PC-9 (cell line): ENCODE measurements at regions of chr3 and their contacts with region 1.

Region 1: DNA sequence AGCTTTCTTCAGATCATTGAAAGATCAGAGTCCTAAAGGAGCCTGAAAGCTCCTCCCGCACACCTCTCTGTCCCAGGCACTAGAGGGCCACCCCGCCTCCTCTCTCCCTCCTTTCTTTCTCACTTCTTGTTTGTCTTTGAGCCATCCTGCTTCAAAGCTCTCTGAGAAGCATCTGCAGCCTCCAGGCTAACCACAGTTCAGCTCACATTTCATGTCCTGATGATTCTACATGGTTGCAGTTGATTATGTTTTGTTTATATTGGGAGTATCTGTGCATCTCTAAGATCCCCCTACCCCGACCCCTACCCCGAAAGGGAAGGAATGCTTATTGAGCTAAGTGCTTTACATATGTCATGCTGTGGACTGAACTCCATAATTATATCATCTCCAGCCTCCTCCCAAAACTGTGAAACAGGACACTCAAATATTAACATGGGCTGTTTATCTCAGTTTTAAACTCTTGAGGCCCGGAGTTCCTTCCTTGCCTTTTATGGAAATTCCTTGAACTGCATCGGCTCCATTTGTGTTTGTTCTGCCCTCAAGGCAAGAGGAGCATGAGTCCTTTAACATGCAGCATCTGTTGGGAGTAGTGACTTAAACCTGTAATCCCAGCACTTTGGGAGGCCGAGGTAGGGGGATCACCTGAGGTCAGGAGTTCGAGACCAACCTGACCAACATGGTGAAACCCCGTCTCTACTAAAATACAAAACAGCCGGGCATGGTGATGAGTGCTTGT is 30.9 kb downstream of the MGLL start:
- DNase-seq: peak; percentile 65 to 84
- H3K4me3 ChIP-seq: no peak overlapping the region
- H3K27ac ChIP-seq: peak overlapping the region; percentile 54
- H3K4me1 ChIP-seq: peaks cover 30% of the 10 kb centered on the region
- H3K27me3 ChIP-seq: no peaks in the 10 kb centered on the region
- CTCF ChIP-seq: peak; percentile 46; the same call in 1 of the 2 replicates

Region 2: DNA sequence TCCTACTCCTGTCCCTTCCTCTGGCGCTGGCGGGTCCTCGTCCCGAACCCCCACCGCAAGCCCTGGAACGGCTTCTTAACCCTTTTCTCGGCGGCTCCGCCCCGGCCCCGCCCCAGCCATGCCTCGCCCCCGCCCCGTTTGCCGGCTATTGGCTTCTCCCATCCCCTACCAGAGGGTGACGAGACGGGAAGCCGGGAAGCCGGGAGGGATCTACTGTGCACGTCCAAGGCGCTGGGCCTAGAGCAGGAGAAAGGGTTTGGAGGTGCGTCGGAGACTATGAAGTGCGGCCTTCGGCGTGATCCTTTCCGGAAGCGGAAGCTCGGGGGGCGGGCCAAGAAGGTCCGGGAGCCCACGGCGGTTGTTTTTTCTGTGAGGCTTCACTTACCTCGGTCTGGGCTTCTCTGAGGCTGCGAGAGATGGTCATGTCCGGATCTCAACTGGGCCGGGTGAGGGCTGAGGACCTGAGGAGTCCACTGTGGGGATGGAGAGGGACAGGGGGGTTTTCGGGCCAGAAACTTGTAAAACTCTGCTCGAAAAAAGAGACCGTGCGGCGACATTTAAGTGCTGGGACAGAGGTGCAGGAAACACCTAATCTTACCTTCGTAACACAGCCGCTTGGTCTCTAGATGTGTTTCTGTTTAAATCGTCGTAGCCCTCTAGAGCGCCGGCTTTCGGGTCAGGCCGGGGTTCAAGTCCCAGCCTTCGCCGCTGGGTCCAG is 1801.0 kb before region 1 on chr3:
- CTCF ChIA-PET with region 1: no interaction called
- POLR2A ChIA-PET with region 1: interaction called, 10 read pairs
- intact Hi-C with region 1: no loop called
- DNase-seq: peak; percentile 70 to 85
- H3K4me3 ChIP-seq: peak overlapping the region; percentile 63
- H3K27ac ChIP-seq: no peak overlapping the region
- H3K4me1 ChIP-seq: no peaks in the 10 kb centered on the region; the same call in 1 of the 2 replicates
- H3K27me3 ChIP-seq: peaks cover 4% of the 10 kb centered on the region; the same call in 1 of the 2 replicates
- CTCF ChIP-seq: no peak

Region 3: DNA sequence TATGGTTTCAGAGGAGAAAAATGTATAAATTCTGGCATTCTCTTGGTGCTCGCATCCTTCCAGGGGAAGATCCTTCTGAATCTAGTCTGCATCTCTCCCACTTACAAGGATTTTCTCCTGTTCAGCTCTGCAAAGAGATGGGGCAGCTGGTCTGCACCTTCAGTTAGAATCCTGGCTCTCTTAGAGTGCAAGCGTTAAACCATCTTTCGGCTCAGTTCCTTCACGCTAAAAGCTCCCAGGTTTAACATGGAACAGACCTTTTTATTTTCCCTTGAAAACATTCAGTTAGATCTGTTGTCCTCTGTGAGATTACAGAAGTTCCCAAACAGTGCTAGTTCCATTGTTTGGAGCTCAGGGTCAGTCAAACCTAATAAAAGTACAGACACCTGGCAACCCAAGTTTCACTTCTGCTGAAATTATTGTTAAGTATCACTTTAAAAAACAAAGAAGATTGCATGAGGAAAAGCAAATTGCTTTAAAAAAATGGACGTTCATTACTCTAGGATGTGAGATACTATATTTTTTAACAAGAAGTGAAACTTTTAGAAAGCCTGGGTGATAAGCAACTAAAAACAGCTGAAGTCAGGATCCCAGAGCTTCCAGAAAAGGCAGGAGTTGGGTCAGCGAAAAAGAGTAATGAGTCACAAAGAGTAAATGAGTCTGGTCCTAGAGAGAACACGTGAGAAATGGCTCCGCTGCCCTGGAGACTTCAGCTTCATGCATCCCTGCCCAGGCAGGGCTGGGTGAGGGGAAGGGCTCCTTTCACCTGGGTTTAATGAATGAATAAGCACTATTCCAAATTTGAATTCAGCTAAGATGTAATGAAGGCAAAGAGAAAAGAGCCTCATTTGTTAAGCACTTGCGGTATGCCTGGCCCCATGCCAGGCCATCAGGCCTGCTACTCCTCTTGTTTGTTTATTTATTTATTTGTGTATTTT is 55.3 kb before region 1 on chr3:
- CTCF ChIA-PET with region 1: no interaction called
- POLR2A ChIA-PET with region 1: no interaction called
- intact Hi-C with region 1: no loop called
- DNase-seq: peak in 1 of 2 experiments; percentile 36
- H3K4me3 ChIP-seq: no peak overlapping the region
- H3K27ac ChIP-seq: no peak overlapping the region
- H3K4me1 ChIP-seq: peaks cover 10% of the 10 kb centered on the region
- H3K27me3 ChIP-seq: no peaks in the 10 kb centered on the region
- CTCF ChIP-seq: no peak

Region 4: GRCh38 chr3:127762077-127762786 is 29.1 kb before region 1 on chr3:
- CTCF ChIA-PET with region 1: no interaction called
- POLR2A ChIA-PET with region 1: no interaction called
- intact Hi-C with region 1: no loop called
- DNase-seq: no peak
- H3K4me3 ChIP-seq: no peak overlapping the region
- H3K27ac ChIP-seq: no peak overlapping the region
- H3K4me1 ChIP-seq: no peaks in the 10 kb centered on the region
- H3K27me3 ChIP-seq: no peaks in the 10 kb centered on the region
- CTCF ChIP-seq: no peak

Region 5: GRCh38 chr3:127817396-127817841 is 26.0 kb after region 1 on chr3:
- CTCF ChIA-PET with region 1: interaction called, 19 read pairs
- POLR2A ChIA-PET with region 1: interaction called, 3 read pairs
- intact Hi-C with region 1: loop called (anchors 1 kb)
- DNase-seq: peak; percentile 78 to 98
- H3K4me3 ChIP-seq: peak overlapping the region; percentile 16; the same call in 1 of the 2 replicates
- H3K27ac ChIP-seq: peak overlapping the region; percentile 93
- H3K4me1 ChIP-seq: peaks cover 79% of the 10 kb centered on the region
- H3K27me3 ChIP-seq: no peaks in the 10 kb centered on the region
- CTCF ChIP-seq: peak; percentile 26; the same call in 1 of the 2 replicates

Region 6: GRCh38 chr3:127902486-127902885 is 111.1 kb after region 1 on chr3:
- CTCF ChIA-PET with region 1: interaction called, 12 read pairs
- POLR2A ChIA-PET with region 1: no interaction called
- intact Hi-C with region 1: no loop called
- DNase-seq: no peak
- H3K4me3 ChIP-seq: no peak overlapping the region
- H3K27ac ChIP-seq: no peak overlapping the region
- H3K4me1 ChIP-seq: no peaks in the 10 kb centered on the region
- H3K27me3 ChIP-seq: no peaks in the 10 kb centered on the region
- CTCF ChIP-seq: no peak

Region 7: GRCh38 chr3:128051837-128052594 is 260.6 kb after region 1 on chr3 and contains the start of gene SEC61A1:
- CTCF ChIA-PET with region 1: no interaction called
- POLR2A ChIA-PET with region 1: no interaction called
- intact Hi-C with region 1: loop called (anchors 10 kb)
- DNase-seq: peak; percentile 78 to 98
- H3K4me3 ChIP-seq: peak within 1 kb of the TSS; percentile 99
- H3K27ac ChIP-seq: peak within 1 kb of the TSS; percentile 81
- H3K4me1 ChIP-seq: peaks cover 26% of the 10 kb centered on the region
- H3K27me3 ChIP-seq: no peaks in the 10 kb centered on the region
- CTCF ChIP-seq: no peak
- total RNA-seq, gene SEC61A1: 110 and 189 TPM in 2 replicates